Activated CD8-positive, alpha-beta T cell treated with anti-CD3 and anti-CD28 coated beads, Interleukin-2, amount 10 ng/mL, durations not matched to agents 7 days and 5 days (primary cell): ENCODE measurements at regions of chr10 and their contacts with region 1.

Region 1: DNA sequence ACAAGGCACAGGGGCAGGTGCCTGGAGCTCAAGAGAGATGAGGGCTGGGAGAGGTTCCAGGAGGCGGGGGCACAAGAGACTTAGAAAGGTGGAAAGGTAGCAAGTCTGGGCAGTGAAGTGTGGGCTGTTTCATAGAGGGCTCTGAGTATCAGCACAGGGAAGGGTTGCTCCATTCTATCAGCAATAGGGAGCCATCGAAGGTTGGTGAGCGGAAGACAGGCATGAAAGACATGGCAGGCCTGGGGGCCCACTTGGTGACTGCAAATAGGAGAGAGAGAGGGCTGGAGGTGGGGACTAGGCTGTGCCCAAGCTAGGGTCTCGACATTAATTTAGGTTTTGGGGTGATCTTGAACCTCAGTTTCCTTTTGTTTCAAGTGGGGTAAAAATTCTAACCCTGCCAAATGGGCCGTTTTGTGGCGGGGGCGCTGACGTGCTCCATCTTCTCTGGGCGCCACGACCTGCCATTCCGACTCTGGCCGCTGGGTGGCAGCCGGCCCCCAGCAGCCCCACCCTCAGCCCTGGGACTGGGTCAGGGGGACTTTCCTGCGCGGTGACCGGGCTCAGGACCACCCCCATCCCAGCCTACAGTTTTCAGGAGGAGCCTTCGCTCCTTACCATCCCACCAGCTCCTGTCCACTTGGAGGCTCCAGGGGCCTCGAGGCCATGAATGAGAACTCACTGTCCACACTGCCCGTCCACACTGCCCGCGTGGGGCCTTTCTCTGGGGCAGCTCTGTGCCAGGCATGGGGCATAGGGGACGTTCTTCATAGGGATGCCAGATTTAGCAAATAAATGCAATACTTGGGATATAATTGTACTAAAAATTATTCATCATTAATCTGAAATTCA is 37.2 kb upstream of the PCBD1 start:
- DNase-seq: peak; percentile 67
- ATAC-seq: peak; percentile 77
- H3K4me3 Mint-ChIP-seq: no peak overlapping the region
- H3K27ac Mint-ChIP-seq: no peak overlapping the region
- H3K4me1 Mint-ChIP-seq: no peaks in the 10 kb centered on the region
- H3K27me3 Mint-ChIP-seq: peaks cover 7% of the 10 kb centered on the region

Region 2: DNA sequence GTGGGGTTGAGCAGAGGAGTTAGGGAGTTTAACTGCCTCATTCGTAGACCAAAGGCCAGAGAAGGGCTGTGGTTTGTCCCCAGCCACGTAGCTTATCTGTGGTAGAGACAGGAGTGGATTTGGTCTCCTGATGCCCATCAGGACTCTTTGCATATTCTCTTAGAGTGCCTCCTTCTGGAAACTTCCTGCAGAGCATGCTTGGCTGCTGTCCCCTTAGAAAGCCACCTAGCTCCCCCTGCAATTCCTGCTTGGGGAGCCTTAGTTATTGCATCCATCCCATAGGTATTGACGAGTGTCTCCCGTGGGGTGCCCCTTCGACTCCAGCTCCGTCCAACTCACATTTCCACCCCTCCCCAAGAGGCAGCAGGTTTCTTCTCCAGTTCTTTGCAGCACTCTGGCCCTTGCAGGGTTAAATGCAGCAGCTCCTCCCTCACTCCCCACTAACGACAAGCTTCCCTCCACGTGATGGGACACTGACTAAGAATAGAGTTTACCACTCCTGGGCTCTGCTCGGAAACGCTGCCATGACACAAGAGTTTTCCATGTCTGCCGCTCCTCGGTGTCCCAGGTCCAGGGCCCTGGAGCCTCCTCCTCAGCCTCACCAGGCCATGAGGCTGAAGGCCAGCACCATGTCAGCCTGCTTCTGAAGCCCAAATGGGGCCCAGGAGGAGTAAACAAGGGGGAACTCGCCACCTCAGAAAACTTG is 139.0 kb after region 1 on chr10:
- CTCF ChIA-PET with region 1: interaction called, 10 read pairs
- POLR2A ChIA-PET with region 1: no interaction called
- DNase-seq: peak; percentile 22
- ATAC-seq: no peak
- H3K4me3 Mint-ChIP-seq: no peak overlapping the region
- H3K27ac Mint-ChIP-seq: no peak overlapping the region
- H3K4me1 Mint-ChIP-seq: no peaks in the 10 kb centered on the region
- H3K27me3 Mint-ChIP-seq: no peaks in the 10 kb centered on the region

Region 3: DNA sequence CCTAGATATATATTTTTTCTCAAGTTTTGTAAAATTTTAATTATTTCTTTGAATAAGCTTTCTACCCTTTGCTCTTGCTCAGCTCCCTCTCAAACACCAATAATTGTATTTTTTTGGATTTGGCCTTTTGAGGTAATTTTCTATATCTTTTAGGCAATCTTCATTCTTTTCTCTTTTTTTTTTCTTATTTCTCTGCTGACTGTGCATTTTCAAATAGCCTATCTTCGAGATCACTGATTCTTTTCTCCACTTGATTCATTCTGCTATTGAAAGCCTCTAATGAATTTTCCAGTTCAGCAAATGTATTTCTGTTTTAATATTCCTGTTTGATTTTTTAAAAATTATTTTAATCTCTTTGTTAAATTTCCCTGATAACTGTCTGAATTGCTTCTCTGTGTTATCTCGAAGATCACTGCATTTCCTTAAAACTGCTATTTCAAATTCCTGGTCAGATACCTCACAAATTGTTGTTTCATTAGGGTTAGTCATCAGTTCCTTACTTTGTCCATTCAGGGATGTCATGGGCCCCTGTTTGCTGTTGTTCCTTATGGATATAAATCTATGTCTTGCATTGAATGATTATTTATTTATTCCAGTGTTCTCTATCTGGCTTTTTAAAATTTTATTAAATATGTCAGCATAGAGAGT is 186.7 kb after region 1 on chr10:
- CTCF ChIA-PET with region 1: no interaction called
- POLR2A ChIA-PET with region 1: no interaction called
- DNase-seq: no peak
- ATAC-seq: no peak
- H3K4me3 Mint-ChIP-seq: no peak overlapping the region
- H3K27ac Mint-ChIP-seq: no peak overlapping the region
- H3K4me1 Mint-ChIP-seq: no peaks in the 10 kb centered on the region
- H3K27me3 Mint-ChIP-seq: peaks cover 14% of the 10 kb centered on the region

Region 4: DNA sequence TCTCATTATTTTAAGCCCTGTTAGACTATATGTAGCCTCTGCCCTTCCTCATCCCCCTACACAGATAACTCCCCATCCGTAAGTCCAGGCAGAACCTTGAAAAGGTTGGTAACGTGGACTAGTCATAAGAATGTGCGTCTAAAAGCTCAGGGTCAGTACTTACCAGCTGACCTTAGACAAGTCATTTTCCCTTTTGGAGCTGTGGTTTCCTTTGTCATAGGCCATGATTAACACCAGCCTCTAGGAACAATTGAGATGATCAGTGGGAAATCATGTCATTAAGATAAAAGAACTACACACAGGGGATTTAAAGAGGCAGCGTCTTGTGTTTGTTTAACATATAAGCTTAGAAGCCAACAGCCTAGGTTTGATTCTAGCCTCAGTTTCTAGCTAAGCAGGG is 279.9 kb after region 1 on chr10:
- CTCF ChIA-PET with region 1: interaction called, 10 read pairs
- POLR2A ChIA-PET with region 1: no interaction called
- DNase-seq: no peak
- ATAC-seq: no peak
- H3K4me3 Mint-ChIP-seq: no peak overlapping the region
- H3K27ac Mint-ChIP-seq: no peak overlapping the region
- H3K4me1 Mint-ChIP-seq: no peaks in the 10 kb centered on the region
- H3K27me3 Mint-ChIP-seq: peaks cover 36% of the 10 kb centered on the region